Posterior vena cava (tissue), 2 donors: ENCODE measurements at regions of chrX and their contacts with region 1.

Region 1: DNA sequence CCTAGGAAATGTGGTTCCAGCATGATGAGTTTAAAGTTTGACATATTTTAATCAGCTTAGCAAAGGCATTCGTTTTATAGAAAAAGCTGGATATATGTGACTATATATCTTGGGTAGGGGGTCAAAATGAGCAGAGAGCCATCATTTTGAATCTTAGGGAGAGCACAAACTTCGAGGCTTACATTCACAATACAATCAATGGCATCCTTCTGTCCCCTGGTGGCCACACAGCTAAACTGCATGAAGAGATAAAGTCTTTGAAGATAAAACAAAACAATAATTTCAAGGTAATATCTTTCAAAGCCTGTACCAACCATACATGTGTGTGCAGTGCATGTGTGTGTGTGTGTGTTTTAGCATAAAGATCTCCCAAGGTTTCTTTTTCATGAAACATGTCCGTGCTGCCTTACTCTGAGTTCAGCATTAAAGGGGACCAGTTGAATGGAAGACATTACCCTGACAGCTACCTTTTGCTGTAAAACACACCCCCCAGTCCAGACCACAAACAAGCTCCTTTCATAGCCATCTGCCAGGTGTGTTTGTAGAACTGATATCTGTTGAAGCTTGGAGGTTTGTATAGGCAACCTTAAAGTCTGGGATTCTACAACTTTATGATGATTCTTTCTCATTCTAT is 22.0 kb downstream of the DYNLT3 start:
- DNase-seq: no peak

Region 2: GRCh38 chrX:37745354-37745753 is 80.0 kb before region 1 on chrX:
- intact Hi-C with region 1: loop called (anchors 10 kb)
- DNase-seq: peak; percentile 92

Region 3: GRCh38 chrX:37755025-37755424 is 70.3 kb before region 1 on chrX:
- intact Hi-C with region 1: loop called in 1 of 2 experiments (anchors 10 kb)
- DNase-seq: no peak

Region 4: GRCh38 chrX:38103857-38104812 is 278.8 kb after region 1 on chrX:
- intact Hi-C with region 1: no loop called
- DNase-seq: no peak